ENCODE measurements at regions of chr17 and their contacts with region 1.

Region 1: DNA sequence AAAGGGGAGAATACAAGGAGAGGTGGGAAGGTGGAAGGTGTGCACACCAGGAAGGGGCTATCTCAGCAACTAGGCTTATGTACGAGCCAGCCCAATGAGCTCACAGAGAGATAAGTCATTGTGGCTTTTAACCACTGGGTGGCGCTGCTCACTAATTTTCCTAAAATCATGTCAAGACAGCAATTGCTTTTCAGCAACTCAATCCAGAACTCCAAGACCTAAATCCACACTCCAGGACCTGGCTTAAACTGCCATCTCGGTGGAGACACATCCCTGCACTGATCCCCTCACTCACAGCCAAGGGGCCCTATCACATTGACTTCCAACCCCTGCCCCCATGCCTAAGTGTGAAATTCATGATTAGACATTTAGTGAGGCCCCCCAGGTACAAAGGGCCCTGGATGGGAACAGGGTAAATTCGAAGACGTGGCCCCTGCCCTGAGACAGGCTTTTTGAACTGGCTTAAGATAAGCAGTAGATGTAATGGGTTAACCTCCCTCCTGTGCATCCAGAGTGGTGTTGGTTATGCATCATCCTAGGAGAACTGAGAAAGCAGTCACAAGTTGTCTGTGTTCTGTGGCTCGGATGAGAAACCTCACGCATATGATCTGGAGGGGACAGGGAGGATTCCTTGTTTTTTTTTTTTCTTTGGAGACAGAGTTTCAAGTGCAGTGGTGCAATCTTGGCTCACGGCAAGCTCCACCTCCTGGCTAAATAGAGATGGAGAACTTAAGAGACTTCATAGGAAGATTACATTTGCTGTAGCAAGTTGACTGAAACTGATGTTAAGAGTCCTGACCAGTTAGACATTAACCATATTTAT is 11.5 kb downstream of the CCL16 start:
- DNase-seq: peak in 5 of 6 donors; percentile 66 to 83 (median 72)
- ATAC-seq: peak; percentile 64 to 88 (median 86)
- H3K4me3 ChIP-seq: no peak overlapping the region
- H3K27ac ChIP-seq: no peak overlapping the region
- H3K4me1 ChIP-seq: peaks cover 0 to 10% (median 7%) of the 10 kb centered on the region in 3 donors
- H3K27me3 ChIP-seq: no peaks in the 10 kb centered on the region
- CTCF ChIP-seq: peak; percentile 69 to 88 (median 78)

Region 2: GRCh38 chr17:36066365-36066985 is 96.7 kb after region 1 on chr17:
- intact Hi-C with region 1: loop called in 2 of 3 experiments (anchors 5 to 10 kb)
- DNase-seq: no peak
- ATAC-seq: no peak
- H3K4me3 ChIP-seq: no peak overlapping the region
- H3K27ac ChIP-seq: no peak overlapping the region
- H3K4me1 ChIP-seq: no peaks in the 10 kb centered on the region
- H3K27me3 ChIP-seq: no peaks in the 10 kb centered on the region
- CTCF ChIP-seq: no peak

Region 3: GRCh38 chr17:36148559-36149295 is 179.0 kb after region 1 on chr17:
- intact Hi-C with region 1: loop called in 1 of 3 experiments (anchors 5 kb)
- DNase-seq: peak; percentile 29 to 85 (median 62)
- ATAC-seq: peak; percentile 92 to 99 (median 94)
- H3K4me3 ChIP-seq: no peak overlapping the region
- H3K27ac ChIP-seq: no peak overlapping the region
- H3K4me1 ChIP-seq: no peaks in the 10 kb centered on the region
- H3K27me3 ChIP-seq: peaks cover 0 to 3% (median 0%) of the 10 kb centered on the region in 4 donors
- CTCF ChIP-seq: peak; percentile 92 to 100 (median 100)